ENCODE measurements at regions of chr14 and their contacts with region 1.

Region 1: GRCh38 chr14:68548194-68549056 is 244.4 kb downstream of the ZFP36L1 start:
- DNase-seq: peak; percentile 94
- H3K4me3 ChIP-seq: peak overlapping the region in 1 of 4 donors; percentile 1
- H3K27ac ChIP-seq: peak overlapping the region; percentile 90 to 96 (median 95)
- H3K4me1 ChIP-seq: peaks cover 74 to 100% (median 94%) of the 10 kb centered on the region in 4 donors
- H3K27me3 ChIP-seq: no peaks in the 10 kb centered on the region
- CTCF ChIP-seq: no peak
- EP300 ChIP-seq: peak; percentile 88
- POLR2A ChIP-seq: no peak

Region 2: DNA sequence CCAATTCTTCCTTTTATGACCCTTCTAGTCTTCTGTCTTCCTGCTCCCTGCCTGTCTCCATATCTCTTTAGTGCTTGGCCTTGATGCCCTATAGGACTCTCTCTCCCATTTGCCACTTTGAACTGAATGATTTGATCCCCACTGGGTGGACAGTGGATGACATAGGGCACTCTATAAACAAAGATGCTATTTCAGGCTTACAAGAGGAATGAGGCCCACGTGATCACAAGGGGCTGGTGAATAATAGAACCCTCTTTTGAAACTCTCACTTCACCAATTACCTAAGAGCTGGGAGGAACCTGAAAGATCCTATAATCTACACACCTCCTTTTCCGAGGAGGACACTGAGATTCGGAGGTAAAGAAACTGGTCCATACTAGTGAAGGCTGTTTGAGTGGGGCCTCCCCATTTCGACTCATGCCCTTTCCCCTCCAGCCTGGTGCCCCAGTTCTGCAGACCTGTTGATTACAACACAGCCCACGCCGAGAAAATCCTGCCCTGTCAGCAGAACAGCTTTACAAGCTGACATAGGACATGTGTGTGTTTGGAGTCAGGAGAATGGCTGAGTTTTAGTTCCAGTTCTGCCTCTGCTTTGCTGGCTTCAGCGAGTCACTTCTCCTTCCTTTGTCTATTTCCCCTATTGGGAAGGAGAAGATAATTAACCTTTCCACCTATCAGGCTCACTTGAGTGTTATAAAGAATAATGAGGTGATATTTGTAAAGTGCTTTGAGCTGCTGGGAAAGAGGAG is 155.9 kb before region 1 on chr14:
- intact Hi-C with region 1: loop called (anchors 10 kb)
- DNase-seq: no peak
- H3K4me3 ChIP-seq: no peak overlapping the region
- H3K27ac ChIP-seq: peak overlapping the region; percentile 68 to 79 (median 78)
- H3K4me1 ChIP-seq: peaks cover 42 to 82% (median 82%) of the 10 kb centered on the region in 4 donors
- H3K27me3 ChIP-seq: no peaks in the 10 kb centered on the region
- CTCF ChIP-seq: no peak
- EP300 ChIP-seq: no peak
- POLR2A ChIP-seq: no peak

Region 3: GRCh38 chr14:68476212-68476907 is 72.1 kb before region 1 on chr14:
- intact Hi-C with region 1: no loop called
- DNase-seq: no peak
- H3K4me3 ChIP-seq: no peak overlapping the region
- H3K27ac ChIP-seq: peak overlapping the region; percentile 45 to 77 (median 64)
- H3K4me1 ChIP-seq: peaks cover 5 to 27% (median 21%) of the 10 kb centered on the region in 4 donors
- H3K27me3 ChIP-seq: no peaks in the 10 kb centered on the region
- CTCF ChIP-seq: no peak
- EP300 ChIP-seq: no peak
- POLR2A ChIP-seq: no peak

Region 4: DNA sequence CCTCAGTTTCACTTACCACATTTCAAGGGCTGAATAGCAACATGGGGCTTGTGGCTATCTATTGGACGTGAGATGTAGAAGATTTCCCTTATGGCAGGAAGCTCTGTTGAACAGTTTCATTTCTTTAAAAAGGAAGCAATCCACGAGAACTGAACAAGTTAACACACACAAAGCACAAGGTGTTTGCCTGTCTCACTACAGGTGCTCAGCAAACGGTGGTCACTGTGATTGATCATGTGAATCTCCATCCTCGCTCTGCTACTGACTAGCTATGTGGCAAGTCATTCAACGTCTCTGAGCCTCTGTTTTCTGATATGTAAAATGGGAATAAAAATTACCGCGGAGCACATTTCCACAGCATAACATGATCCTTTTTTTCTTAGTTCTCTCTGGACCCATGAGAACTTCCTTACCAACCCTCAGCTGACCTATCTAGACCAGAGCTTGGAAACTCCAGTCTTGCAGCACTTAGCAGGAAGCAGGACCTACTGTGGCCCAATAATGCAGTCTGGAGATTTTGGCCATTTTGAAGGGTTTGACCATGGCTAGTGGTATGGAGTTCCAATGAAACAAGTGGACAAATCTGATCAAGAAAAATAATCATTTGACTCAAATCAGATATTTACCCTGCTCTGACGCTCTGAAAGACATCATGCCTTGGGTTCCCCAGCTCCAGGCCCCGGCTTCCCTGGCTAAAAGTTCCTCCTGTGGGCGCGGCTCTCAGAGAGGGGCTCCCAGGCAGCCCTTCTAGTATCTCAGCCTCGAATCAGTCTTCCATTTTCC is 34.4 kb before region 1 on chr14:
- intact Hi-C with region 1: no loop called
- DNase-seq: no peak
- H3K4me3 ChIP-seq: no peak overlapping the region
- H3K27ac ChIP-seq: peak overlapping the region in 2 of 4 donors; percentile 16 to 70
- H3K4me1 ChIP-seq: peaks cover 42 to 71% (median 68%) of the 10 kb centered on the region in 4 donors
- H3K27me3 ChIP-seq: no peaks in the 10 kb centered on the region
- CTCF ChIP-seq: no peak
- EP300 ChIP-seq: no peak
- POLR2A ChIP-seq: no peak

Region 5: DNA sequence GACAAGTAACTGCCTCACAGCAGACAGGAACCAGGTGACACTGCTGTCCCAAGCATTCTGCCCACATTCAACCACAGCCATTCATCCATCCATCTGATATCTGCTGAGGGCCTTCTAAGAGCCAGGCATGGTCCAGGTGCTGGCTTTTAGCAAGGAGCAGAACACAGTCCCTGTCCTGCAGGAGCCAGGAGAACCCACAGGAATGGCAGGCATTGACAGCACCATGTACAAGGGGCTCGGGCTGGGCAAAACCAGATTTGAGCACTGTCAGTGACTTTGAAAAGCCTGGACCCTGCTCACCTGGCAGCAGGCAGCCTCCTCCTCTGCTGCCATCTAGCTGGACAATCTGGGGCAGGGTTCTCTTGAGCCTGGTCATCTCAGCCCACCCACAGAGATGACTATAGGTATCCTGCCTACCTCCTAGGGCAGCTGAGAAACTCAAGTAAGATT is 107.5 kb after region 1 on chr14:
- intact Hi-C with region 1: loop called (anchors 10 kb)
- DNase-seq: no peak
- H3K4me3 ChIP-seq: no peak overlapping the region
- H3K27ac ChIP-seq: peak overlapping the region; percentile 88 to 91 (median 90)
- H3K4me1 ChIP-seq: peaks cover 44 to 100% (median 85%) of the 10 kb centered on the region in 4 donors
- H3K27me3 ChIP-seq: no peaks in the 10 kb centered on the region
- CTCF ChIP-seq: peak; percentile 26 to 43 (median 27)
- EP300 ChIP-seq: no peak
- POLR2A ChIP-seq: no peak

Region 6: DNA sequence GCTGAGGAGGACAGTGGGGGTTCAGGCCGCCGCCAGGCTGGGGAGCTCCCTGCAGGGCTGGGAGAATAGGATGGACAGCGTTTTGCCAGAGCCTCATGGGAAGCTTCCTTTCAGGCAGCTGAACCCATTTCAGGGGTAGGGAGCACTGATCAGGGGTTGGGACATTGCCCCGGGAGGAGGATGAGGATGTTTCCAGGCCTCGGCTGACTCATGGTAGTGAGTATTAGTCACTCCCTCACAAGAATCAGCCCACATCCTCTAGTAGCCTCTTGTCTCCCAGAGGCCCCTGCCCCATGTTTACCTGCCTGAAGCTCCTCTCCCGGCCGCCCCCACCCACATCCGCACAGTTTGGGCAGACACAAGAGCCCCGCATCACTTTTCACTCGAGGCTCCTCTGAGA is 154.7 kb after region 1 on chr14:
- intact Hi-C with region 1: no loop called
- DNase-seq: no peak
- H3K4me3 ChIP-seq: no peak overlapping the region
- H3K27ac ChIP-seq: no peak overlapping the region
- H3K4me1 ChIP-seq: peaks cover 6 to 34% (median 31%) of the 10 kb centered on the region in 4 donors
- H3K27me3 ChIP-seq: no peaks in the 10 kb centered on the region
- CTCF ChIP-seq: no peak
- EP300 ChIP-seq: no peak
- POLR2A ChIP-seq: no peak

Region 7: DNA sequence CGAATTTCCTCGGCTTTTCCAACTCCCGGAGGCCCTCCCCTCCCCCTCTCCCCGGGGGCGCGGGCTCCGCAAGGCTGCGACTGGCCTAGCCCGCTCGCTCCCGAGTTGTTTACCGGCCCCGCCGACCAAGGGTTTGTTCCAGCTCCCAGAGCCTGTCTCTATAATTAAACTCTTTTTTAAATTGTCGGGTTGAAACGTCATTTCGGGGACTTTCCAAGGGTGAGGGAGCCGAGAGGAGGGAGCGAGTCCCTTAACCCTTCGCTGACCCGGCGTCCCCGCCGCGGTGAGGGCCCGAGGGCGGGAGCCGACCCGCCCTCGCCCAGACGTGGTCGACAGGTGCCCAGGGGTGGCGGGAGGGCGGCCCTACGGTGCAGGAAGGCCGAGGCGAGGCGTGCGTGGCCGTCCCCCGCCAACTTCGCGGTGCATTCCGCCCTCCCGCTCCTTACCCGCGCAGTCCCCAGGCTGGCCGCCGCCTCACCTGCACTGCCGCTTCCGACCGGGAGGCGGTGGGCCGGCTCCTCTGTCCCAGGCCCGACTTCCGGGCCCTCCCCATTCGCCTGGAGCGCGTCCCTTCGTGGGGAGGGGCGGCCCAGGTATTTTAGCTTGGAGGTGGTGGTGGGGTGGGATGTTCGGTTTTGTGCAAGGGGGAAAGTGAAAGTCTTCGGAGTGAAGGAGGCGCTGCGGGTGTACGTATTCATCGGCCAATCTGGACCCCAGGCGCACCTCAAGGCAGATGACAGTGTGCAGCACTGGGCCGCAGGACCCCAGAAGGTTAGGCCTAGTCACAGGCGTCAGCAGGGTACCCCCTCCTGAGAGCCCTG is 247.4 kb after region 1 on chr14:
- intact Hi-C with region 1: loop called (anchors 5 kb)
- DNase-seq: peak; percentile 96
- H3K4me3 ChIP-seq: peak overlapping the region; percentile 83 to 95 (median 87)
- H3K27ac ChIP-seq: peak overlapping the region; percentile 99 to 100 (median 100)
- H3K4me1 ChIP-seq: peaks cover 6 to 20% (median 18%) of the 10 kb centered on the region in 4 donors
- H3K27me3 ChIP-seq: peaks cover 0 to 4% (median 0%) of the 10 kb centered on the region in 4 donors
- CTCF ChIP-seq: peak in 2 of 3 experiments; percentile 83 to 86
- EP300 ChIP-seq: peak; percentile 30
- POLR2A ChIP-seq: peak; percentile 64